HepG2 (cell line): ENCODE measurements at regions of chr16 and their contacts with region 1.

Region 1: GRCh38 chr16:58025351-58026138 is at the start of gene MMP15:
- DNase-seq: peak; percentile 91
- ATAC-seq: peak; percentile 57
- H3K4me3 ChIP-seq: peak within 1 kb of the TSS; percentile 87 to 97 (median 88)
- H3K27ac ChIP-seq: peak within 1 kb of the TSS; percentile 95
- H3K4me1 ChIP-seq: peaks cover 49% of the 10 kb centered on the region
- H3K27me3 ChIP-seq: no peaks in the 10 kb centered on the region
- CTCF ChIP-seq: peak; percentile 24
- EP300 ChIP-seq: no peak; a peak in 1 of 4 replicates
- POLR2A ChIP-seq: peak; percentile 50 to 91
- RAD21 ChIP-seq: no peak
- total RNA-seq, gene MMP15: 17.2 and 35.2 TPM in 2 replicates

Region 2: GRCh38 chr16:58000706-58001676 is 24.6 kb before region 1 on chr16 and contains the start of gene USB1:
- CTCF ChIA-PET with region 1: no interaction called
- POLR2A ChIA-PET with region 1: interaction called, 24 read pairs
- in situ Hi-C with region 1: no loop called
- intact Hi-C with region 1: no loop called
- DNase-seq: peak; percentile 88
- ATAC-seq: peak; percentile 92
- H3K4me3 ChIP-seq: peak within 1 kb of the TSS; percentile 85 to 98 (median 93)
- H3K27ac ChIP-seq: peak within 1 kb of the TSS; percentile 81
- H3K4me1 ChIP-seq: peaks cover 34% of the 10 kb centered on the region
- H3K27me3 ChIP-seq: no peaks in the 10 kb centered on the region; a peak in 1 of 5 replicates
- CTCF ChIP-seq: peak; percentile 72
- EP300 ChIP-seq: 0 out of 4 replicates have a peak, but pooled peaks of 1 of the 2 experiments have one; percentile 9
- POLR2A ChIP-seq: peak; percentile 68 to 91
- RAD21 ChIP-seq: peak; percentile 85
- total RNA-seq, gene USB1: 16.7 and 33.5 TPM in 2 replicates

Region 3: DNA sequence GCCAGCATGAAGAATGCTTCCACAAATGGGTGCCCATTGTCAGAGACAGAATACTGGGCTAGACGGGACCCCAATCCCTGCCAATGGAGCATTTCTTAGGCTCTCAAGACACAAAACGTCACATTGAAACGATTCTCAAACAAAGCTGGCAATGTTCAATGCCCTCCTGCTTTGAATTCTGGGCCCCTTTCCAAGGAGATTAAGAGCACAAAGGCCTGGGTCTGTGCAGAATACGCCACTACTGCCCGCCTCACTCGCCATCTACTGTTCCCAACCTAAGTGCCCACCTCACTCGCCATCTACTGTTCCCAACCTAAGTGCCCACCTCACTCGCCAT is 93.9 kb after region 1 on chr16:
- CTCF ChIA-PET with region 1: interaction called, 40 read pairs
- POLR2A ChIA-PET with region 1: interaction called, 101 read pairs
- in situ Hi-C with region 1: no loop called
- intact Hi-C with region 1: loop called (anchors 1 kb)
- DNase-seq: no peak
- ATAC-seq: no peak
- H3K4me3 ChIP-seq: no peak overlapping the region
- H3K27ac ChIP-seq: no peak overlapping the region
- H3K4me1 ChIP-seq: peaks cover 48% of the 10 kb centered on the region
- H3K27me3 ChIP-seq: no peaks in the 10 kb centered on the region
- CTCF ChIP-seq: no peak
- EP300 ChIP-seq: no peak
- POLR2A ChIP-seq: no peak
- RAD21 ChIP-seq: no peak

Region 4: DNA sequence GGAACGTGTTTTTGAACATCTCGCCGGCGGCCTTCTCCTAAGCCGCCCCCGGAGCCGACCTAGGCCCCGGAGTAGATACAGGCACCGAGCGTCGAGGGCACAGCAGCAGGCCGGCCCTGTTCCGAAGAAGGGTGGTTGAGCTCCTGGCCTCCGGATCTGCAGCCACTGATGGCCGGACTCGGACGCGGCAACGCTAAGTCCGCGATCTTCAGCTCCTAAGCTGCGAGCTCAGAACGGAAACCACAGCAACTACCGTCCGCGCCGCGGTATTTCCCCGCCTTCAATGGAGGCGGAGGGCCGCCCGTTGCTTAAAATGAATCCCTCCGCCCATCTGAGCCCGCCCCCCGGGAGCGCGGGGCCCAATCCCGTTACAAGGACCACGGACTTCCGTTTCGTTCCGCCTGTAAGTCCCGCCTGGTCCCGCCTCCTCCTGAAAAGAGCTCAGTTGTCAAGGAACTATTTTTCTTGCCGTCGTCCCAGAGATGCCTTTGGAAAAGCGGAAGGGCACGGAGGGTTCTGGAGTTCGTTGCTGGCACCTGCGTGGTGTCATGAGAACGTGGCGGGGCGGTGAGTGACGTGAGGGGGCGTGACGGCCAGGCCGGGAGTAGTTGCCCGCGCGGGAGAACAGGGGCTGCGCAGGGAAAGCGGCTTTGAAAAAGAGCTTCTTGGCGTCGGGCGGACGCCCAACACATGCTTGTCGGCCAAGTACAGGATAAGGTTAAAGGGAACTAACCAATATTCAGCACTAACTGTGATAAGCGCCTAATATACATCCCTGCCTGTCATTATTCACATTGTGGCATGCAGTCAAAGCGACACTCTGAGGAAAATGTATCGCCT is 103.8 kb after region 1 on chr16 and contains the start of gene CFAP20:
- CTCF ChIA-PET with region 1: interaction called, 4 read pairs
- POLR2A ChIA-PET with region 1: interaction called, 101 read pairs
- in situ Hi-C with region 1: loop called (anchors 5 kb)
- intact Hi-C with region 1: loop called (anchors 1 kb)
- DNase-seq: peak; percentile 100
- ATAC-seq: peak; percentile 89
- H3K4me3 ChIP-seq: peak within 1 kb of the TSS; percentile 67 to 95 (median 92)
- H3K27ac ChIP-seq: peak within 1 kb of the TSS; percentile 91
- H3K4me1 ChIP-seq: peaks cover 44% of the 10 kb centered on the region
- H3K27me3 ChIP-seq: no peaks in the 10 kb centered on the region
- CTCF ChIP-seq: peak; percentile 35
- EP300 ChIP-seq: peak in 1 of 2 experiments; percentile 67; a peak in 3 of 4 replicates
- POLR2A ChIP-seq: peak; percentile 92 to 97
- RAD21 ChIP-seq: peak; percentile 63
- total RNA-seq, gene CFAP20: 87.4 and 103 TPM in 2 replicates

Region 5: DNA sequence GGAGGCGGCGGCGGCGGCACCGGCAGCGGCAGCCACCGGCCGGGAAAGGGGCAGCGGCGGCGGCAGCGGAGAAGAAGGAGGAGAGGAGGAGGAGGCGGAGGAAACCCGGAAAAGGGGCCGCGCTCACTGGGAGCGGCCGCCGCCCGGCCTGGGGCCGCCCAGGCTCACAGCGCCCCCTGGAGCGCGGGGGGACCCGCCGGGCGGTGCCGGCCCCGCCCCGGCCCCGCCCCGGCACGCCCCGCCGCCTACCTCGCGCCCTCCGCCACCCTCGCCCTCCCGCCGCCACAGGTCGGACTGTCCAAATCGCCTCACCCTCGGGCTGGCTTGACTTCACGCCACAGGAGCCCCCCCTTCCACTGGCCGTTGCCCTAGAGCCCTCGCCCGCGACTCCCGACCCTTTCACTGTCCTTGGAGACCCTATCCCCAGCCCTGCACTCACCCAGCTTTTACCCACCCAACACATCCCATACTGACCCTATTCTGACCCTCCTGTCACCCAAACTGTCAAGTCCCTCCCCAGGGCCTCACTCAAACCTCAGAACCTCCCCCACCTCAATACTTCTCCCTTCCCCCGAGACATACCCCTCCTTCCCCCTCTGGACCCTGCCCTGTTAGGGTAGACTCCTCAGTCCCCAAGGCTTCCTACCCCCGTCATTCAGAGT is 172.6 kb after region 1 on chr16 and contains the start of gene CSNK2A2:
- CTCF ChIA-PET with region 1: no interaction called
- POLR2A ChIA-PET with region 1: interaction called, 5 read pairs
- in situ Hi-C with region 1: no loop called
- intact Hi-C with region 1: loop called (anchors 10 kb)
- DNase-seq: peak; percentile 56
- ATAC-seq: peak; percentile 93
- H3K4me3 ChIP-seq: peak within 1 kb of the TSS; percentile 64 to 92 (median 91)
- H3K27ac ChIP-seq: peak within 1 kb of the TSS; percentile 14
- H3K4me1 ChIP-seq: peaks cover 22% of the 10 kb centered on the region
- H3K27me3 ChIP-seq: peaks cover 2 to 22% of the 10 kb centered on the region in 2 experiments; a peak in 2 of 5 replicates
- CTCF ChIP-seq: peak; percentile 52
- EP300 ChIP-seq: no peak
- POLR2A ChIP-seq: peak; percentile 19 to 40; a peak in 1 of 4 replicates
- RAD21 ChIP-seq: peak; percentile 67
- total RNA-seq, gene CSNK2A2: 46.4 and 75.8 TPM in 2 replicates

Region 6: DNA sequence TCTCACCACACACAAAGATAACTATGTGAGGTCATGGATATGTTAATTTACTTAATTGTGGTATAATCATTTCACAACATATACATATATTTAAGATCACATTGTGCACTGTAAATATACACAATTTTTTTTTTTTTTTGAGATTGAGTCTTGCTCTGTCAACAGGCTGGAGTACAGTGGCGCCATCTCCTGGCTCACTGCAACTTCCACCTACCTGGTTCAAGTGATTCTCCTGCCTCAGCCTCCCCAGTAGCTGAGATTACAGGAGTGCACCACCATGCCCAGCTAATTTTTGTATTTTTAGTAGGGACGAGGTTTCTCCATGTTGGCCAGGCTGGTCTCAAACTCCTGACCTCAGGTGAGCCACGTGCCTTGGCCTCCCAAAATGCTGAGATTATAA is 280.8 kb after region 1 on chr16:
- CTCF ChIA-PET with region 1: no interaction called
- POLR2A ChIA-PET with region 1: no interaction called
- in situ Hi-C with region 1: no loop called
- intact Hi-C with region 1: loop called (anchors 10 kb)
- DNase-seq: peak; percentile 15
- ATAC-seq: no peak; the same call in 2 of the 3 replicates
- H3K4me3 ChIP-seq: no peak overlapping the region
- H3K27ac ChIP-seq: no peak overlapping the region
- H3K4me1 ChIP-seq: no peaks in the 10 kb centered on the region
- H3K27me3 ChIP-seq: no peaks in the 10 kb centered on the region
- CTCF ChIP-seq: peak; percentile 65
- EP300 ChIP-seq: no peak
- POLR2A ChIP-seq: no peak
- RAD21 ChIP-seq: no peak

Region 7: DNA sequence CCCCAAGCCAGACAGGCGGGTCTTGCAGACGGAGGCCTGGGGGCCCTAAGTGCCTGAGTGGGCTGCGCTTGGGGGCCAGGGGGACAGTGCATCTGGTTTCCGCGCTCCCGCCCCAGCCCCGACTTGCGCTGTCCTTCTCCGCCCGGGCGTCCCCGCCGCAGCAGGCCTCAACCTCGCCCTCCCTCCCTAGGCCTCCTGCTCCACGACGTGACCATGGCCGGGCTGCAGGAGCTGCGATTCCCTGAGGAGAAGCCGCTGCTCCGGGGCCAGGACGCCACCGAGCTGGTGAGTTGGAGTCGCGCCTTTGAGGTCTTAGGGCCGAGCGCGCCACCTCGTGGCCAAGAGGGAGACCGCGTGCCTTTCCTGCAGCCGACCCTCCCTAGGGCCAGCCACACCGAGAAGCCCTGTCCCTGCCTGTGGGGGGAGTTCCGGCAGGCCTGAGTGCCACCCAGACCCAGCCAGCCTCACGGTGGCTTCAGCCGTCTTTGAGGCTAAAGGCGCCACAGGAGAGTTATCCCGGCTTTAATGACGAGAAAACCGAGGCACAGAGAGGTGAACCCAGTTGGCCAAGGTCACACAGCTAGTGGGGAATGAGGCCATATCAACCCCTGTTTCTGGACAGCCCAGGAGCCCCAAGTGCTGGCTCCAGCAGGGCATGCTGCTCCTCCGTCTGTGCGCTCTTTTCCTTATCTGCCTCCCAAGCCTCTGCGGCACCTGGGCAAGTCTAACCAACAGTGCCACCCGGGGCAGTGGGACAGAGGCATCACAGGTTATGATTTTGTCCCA is 462.2 kb after region 1 on chr16:
- CTCF ChIA-PET with region 1: no interaction called
- POLR2A ChIA-PET with region 1: no interaction called
- in situ Hi-C with region 1: no loop called
- intact Hi-C with region 1: loop called (anchors 5 kb)
- DNase-seq: peak; percentile 71
- ATAC-seq: peak; percentile 95
- H3K4me3 ChIP-seq: no peak overlapping the region
- H3K27ac ChIP-seq: no peak overlapping the region
- H3K4me1 ChIP-seq: no peaks in the 10 kb centered on the region
- H3K27me3 ChIP-seq: peaks cover 2 to 14% of the 10 kb centered on the region in 2 experiments; a peak in 3 of 5 replicates
- CTCF ChIP-seq: peak; percentile 100
- EP300 ChIP-seq: no peak
- POLR2A ChIP-seq: no peak
- RAD21 ChIP-seq: peak; percentile 99